ENCODE measurements at regions of chr12 and their contacts with region 1.

Region 1: DNA sequence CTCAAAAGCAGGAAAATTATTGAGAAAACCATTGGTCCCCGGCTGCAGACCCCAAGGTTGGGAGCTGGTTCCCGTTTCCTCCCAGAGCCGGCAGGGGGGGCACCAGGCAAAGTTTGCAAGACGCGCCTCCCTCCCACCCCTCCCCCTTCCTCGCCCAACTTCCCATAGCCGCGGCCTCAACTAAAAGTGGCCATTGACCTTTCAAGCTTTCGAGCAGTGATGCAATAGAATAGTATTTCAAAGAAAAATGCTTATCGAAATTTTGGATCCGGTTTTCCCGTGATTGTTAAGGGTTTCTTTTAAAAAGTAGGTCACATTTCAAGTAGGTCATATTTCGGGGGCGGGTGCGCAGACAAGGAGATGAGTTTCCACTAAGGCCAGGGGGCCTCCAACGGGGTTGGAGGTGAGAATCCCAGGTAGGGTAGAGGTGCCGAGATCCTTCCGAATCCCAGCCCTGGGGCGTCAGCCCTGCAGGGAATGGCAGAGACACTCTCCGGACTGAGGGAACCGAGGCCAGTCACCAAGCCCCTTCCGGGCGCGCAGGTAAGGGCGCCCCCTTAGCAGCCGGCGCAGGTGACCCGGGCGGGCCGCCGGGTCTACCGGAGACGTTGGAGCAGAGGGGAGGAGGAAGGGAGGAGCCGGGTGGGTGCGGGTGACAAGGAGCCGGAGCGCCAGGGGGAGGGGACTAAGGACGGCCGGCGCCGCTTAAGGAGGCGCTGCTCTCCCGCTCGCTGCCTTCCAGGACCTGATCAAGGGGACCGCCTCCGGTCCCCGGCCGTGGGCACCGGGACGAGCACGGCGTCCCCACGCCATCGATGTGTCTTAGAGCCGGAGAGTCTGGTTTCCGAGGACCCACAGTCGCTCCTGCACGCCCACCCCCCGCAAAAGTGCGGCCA is 2.6 kb upstream of the SOCS2 start:
- DNase-seq: peak; percentile 89 to 94 (median 94)
- ATAC-seq: peak; percentile 86 to 92
- H3K4me3 ChIP-seq: peak overlapping the region; percentile 93
- H3K27ac ChIP-seq: peak overlapping the region; percentile 79
- H3K4me1 ChIP-seq: no peaks in the 10 kb centered on the region
- H3K27me3 ChIP-seq: no peaks in the 10 kb centered on the region

Region 2: DNA sequence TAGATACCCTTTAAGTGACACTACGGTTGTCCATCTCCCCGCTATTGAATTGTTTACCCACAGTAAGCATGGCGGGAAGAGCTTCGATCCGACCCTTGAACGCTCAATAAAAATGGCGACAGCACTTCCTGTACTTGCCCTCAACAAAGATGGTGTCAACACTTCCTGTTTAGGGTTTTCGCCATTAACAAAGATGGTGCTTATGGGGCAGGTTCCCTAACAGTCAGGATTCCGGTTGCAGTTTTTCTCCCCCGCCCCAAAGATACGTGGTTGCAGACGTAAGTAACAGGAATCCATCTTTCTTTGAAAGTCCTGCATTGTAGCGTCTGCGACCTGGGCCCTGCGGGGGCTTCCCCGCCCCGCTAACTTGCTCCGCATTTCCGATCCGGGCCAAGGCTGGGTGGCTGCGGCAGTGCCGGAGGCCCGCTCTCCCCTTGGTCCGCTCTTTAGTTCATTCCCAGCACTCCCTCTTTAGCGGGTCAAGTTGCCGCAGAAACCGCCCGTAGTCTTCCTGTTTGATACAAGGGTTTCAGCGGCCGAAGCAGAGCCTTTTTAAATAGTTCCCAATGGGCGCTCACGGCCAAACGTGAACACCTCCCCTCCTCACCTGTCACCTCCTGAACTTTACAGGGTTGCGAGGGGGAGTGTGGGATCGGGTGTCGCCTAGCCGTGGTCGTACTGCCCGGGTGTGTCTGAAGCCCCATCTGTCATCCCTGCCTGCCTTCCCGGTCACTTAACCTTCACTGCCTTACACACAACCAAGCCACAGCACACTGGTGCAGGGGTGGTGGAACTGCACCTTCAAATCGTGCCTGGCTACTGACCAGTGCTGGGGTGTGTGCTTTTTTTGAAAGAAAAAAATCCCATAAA is 107.5 kb after region 1 on chr12 and contains the start of gene CRADD:
- intact Hi-C with region 1: loop called in 3 of 4 experiments (anchors 2 to 10 kb)
- DNase-seq: peak; percentile 77 to 89 (median 87)
- ATAC-seq: peak; percentile 96 to 97
- H3K4me3 ChIP-seq: peak within 1 kb of the TSS; percentile 69
- H3K27ac ChIP-seq: peak within 1 kb of the TSS; percentile 100
- H3K4me1 ChIP-seq: peaks cover 7% of the 10 kb centered on the region
- H3K27me3 ChIP-seq: no peaks in the 10 kb centered on the region
- total RNA-seq, gene CRADD: 29.1 to 45.7 (median 38.3) TPM

Region 3: DNA sequence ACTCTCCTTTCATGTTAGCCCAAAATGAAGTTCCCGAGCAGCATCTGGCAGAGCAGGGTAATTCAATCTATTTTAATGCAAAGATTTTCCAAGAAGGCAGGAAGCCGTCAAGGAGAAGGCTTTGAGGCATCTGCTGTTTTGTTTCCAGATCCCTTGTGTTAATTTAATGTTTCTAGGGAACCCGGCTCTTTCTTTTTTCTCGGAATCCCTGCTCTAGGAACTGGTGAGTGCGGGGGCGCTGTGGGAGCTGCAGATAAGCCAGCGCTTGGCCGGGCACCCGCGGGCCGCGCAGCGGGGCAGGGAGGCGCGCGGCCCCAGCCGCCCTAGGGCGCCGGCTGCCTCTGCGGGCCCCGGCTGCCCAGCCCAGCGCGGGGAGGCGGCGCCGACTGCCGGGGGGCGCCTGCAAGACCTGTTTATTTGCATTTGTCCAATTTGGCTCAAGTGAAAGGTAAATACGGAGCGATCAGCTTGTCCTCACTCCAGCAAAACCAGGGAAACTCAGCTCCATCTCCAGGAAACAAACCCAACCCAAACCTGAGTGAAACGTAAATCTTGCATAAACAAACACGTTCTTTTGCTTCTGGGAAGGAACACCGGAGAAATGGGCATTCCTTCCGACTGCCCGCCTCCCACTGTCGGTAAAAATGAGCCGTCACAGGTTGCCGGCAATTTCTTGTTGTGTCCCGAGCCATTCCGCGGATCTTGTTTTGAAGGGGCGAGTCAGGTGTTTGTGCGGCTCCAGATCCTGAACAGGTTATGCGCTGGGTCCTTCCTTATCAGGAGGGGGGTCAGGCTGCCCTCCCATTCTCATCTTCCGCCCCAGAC is 172.4 kb after region 1 on chr12:
- intact Hi-C with region 1: loop called in 3 of 4 experiments (anchors 2 to 5 kb)
- DNase-seq: peak; percentile 76 to 93 (median 91)
- ATAC-seq: peak; percentile 95 to 96
- H3K4me3 ChIP-seq: peak overlapping the region; percentile 84
- H3K27ac ChIP-seq: peak overlapping the region; percentile 98
- H3K4me1 ChIP-seq: peaks cover 12% of the 10 kb centered on the region
- H3K27me3 ChIP-seq: no peaks in the 10 kb centered on the region

Region 4: GRCh38 chr12:93979189-93979588 is 409.3 kb after region 1 on chr12:
- intact Hi-C with region 1: loop called in 3 of 4 experiments (anchors 5 to 10 kb)
- DNase-seq: no peak
- ATAC-seq: no peak
- H3K4me3 ChIP-seq: no peak overlapping the region
- H3K27ac ChIP-seq: peak overlapping the region; percentile 45
- H3K4me1 ChIP-seq: peaks cover 18% of the 10 kb centered on the region
- H3K27me3 ChIP-seq: no peaks in the 10 kb centered on the region